ENCODE measurements at regions of chr7 and their contacts with region 1.

Region 1: GRCh38 chr7:24381894-24382505 is 98.0 kb downstream of the NPY start:
- DNase-seq: peak; percentile 10
- ATAC-seq: peak; percentile 82
- H3K4me3 ChIP-seq: no peak overlapping the region
- H3K27ac ChIP-seq: no peak overlapping the region
- H3K4me1 ChIP-seq: peaks cover 6 to 10% of the 10 kb centered on the region in 2 experiments; a peak in 3 of 4 replicates
- H3K27me3 ChIP-seq: no peaks in the 10 kb centered on the region
- CTCF ChIP-seq: peak; percentile 49 to 69 (median 67); a peak in 5 of 6 replicates
- POLR2A ChIP-seq: no peak
- RAD21 ChIP-seq: peak; percentile 72

Region 2: GRCh38 chr7:24318326-24318725 is 63.7 kb before region 1 on chr7:
- CTCF ChIA-PET with region 1: interaction called, 14 read pairs
- POLR2A ChIA-PET with region 1: no interaction called
- RAD21 ChIA-PET with region 1: interaction called in 1 of 2 experiments, 3 read pairs
- intact Hi-C with region 1: no loop called
- DNase-seq: peak; percentile 15
- ATAC-seq: peak; percentile 81
- H3K4me3 ChIP-seq: no peak overlapping the region
- H3K27ac ChIP-seq: no peak overlapping the region
- H3K4me1 ChIP-seq: no peaks in the 10 kb centered on the region
- H3K27me3 ChIP-seq: peaks cover 9% of the 10 kb centered on the region; the same call in 1 of the 2 replicates
- CTCF ChIP-seq: peak; percentile 43 to 52 (median 46); a peak in 4 of 6 replicates
- POLR2A ChIP-seq: no peak
- RAD21 ChIP-seq: peak; percentile 67

Region 3: DNA sequence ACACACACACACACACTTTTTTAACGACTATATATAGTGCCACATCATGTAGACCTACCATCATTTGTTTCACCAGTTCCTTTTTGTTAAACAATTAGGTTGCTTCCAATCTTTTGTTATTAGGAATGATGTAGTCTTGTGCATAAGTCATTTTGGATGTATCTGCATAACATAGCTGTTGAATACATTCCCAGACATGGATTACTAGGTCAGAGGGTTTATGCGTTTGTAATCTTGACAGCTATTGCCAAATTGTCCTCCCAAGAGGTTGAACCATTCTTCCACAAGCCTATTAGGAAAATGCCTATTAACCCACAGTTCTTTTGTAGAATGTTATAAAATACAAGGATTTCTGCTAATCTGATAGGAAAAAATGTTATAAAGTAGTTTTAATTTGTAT is 278.5 kb after region 1 on chr7:
- CTCF ChIA-PET with region 1: no interaction called
- POLR2A ChIA-PET with region 1: no interaction called
- RAD21 ChIA-PET with region 1: no interaction called
- intact Hi-C with region 1: loop called (anchors 5 kb)
- DNase-seq: no peak
- ATAC-seq: no peak
- H3K4me3 ChIP-seq: no peak overlapping the region
- H3K27ac ChIP-seq: no peak overlapping the region
- H3K4me1 ChIP-seq: no peaks in the 10 kb centered on the region
- H3K27me3 ChIP-seq: no peaks in the 10 kb centered on the region
- CTCF ChIP-seq: no peak
- POLR2A ChIP-seq: no peak
- RAD21 ChIP-seq: no peak